IMR-90 (cell line): ENCODE measurements at regions of chr2 and their contacts with region 1.

Region 1: GRCh38 chr2:220664272-220665107 is 907.6 kb downstream of the EPHA4 start:
- DNase-seq: peak; percentile 66
- ATAC-seq: peak; percentile 77
- H3K4me3 ChIP-seq: no peak overlapping the region
- H3K27ac ChIP-seq: peak overlapping the region; percentile 24; the same call in 1 of the 2 replicates
- H3K4me1 ChIP-seq: peaks cover 3% of the 10 kb centered on the region
- H3K27me3 ChIP-seq: no peaks in the 10 kb centered on the region
- CTCF ChIP-seq: no peak
- POLR2A ChIP-seq: no peak
- RAD21 ChIP-seq: no peak

Region 2: GRCh38 chr2:220373878-220374277 is 290.6 kb before region 1 on chr2:
- CTCF ChIA-PET with region 1: no interaction called
- POLR2A ChIA-PET with region 1: no interaction called
- dilution Hi-C with region 1: no loop called
- in situ Hi-C with region 1: no loop called
- intact Hi-C with region 1: loop called (anchors 10 kb)
- DNase-seq: peak; percentile 81
- ATAC-seq: peak; percentile 90
- H3K4me3 ChIP-seq: no peak overlapping the region
- H3K27ac ChIP-seq: no peak overlapping the region
- H3K4me1 ChIP-seq: peaks cover 4% of the 10 kb centered on the region
- H3K27me3 ChIP-seq: no peaks in the 10 kb centered on the region
- CTCF ChIP-seq: no peak
- POLR2A ChIP-seq: no peak
- RAD21 ChIP-seq: no peak